Activated naive CD4-positive, alpha-beta T cell treated with anti-CD3 and anti-CD28 coated beads for 36 hours (primary cell): ENCODE measurements at regions of chrX and their contacts with region 1.

Region 1: DNA sequence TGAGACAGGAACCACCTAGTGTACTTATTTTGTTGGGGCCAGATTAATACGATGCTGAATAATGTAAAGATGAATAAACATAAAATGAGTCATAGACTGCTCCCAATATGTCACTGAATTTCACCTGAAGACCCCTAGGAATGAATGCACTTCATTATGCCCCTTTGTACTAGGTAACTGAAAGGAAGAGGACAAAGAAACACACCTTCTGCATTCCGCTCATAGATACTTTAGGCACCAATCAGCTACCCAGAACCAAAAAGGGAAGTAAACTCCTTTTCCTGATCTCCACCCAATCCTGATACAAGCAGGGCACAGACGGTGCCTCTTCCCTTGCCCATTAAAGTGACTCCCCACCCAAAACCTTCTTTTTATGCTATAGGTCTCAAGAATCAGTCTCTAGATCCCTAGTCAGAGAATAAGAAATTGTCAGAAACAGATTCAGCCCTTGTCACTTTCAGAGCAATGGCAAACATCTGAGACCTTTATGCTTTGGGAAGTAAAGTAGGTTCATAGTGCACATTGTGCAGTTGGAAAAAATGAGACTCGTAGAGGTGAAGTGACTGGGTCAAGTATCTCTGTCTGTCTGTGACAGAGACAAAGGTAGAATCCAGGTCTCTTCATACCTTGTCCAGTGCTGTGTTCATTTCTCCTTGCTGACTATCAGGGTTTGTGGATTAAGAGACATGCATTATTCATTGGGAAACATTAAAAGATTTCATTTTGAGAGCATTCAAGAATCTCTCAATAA is 2.3 kb downstream of the GPR174 start:
- DNase-seq: no peak
- H3K4me3 Mint-ChIP-seq: peak overlapping the region; percentile 93
- H3K27ac Mint-ChIP-seq: peak overlapping the region; percentile 96
- H3K4me1 Mint-ChIP-seq: peaks cover 31% of the 10 kb centered on the region
- H3K27me3 Mint-ChIP-seq: no peaks in the 10 kb centered on the region

Region 2: DNA sequence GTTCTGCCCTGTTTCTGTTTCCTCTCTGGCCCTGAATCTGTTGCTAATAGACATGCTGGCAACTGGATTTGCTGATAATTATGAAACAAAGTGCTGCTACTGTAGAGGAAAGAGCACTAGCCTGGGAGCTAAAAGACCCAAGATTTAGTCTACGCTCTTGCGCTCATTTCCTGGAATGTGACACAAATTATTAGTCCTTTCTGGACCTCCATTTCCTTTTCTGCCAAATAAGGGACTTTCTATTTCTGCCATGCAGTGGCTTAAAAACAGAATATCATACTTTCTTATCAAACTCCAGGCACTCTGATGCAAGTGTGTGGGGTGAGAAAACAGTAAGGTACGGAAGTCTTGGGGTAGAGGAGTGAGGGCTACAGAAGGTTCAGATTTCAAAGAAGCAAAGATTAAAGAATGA is 50.7 kb before region 1 on chrX:
- CTCF ChIA-PET with region 1: interaction called, 5 read pairs
- intact Hi-C with region 1: loop called (anchors 2 kb)
- DNase-seq: no peak
- H3K4me3 Mint-ChIP-seq: peak overlapping the region; percentile 68
- H3K27ac Mint-ChIP-seq: peak overlapping the region; percentile 94
- H3K4me1 Mint-ChIP-seq: peaks cover 71% of the 10 kb centered on the region
- H3K27me3 Mint-ChIP-seq: no peaks in the 10 kb centered on the region

Region 3: GRCh38 chrX:79107891-79108718 is 38.7 kb before region 1 on chrX:
- CTCF ChIA-PET with region 1: interaction called, 4 read pairs
- intact Hi-C with region 1: loop called (anchors 2 kb)
- DNase-seq: no peak
- H3K4me3 Mint-ChIP-seq: peak overlapping the region; percentile 49
- H3K27ac Mint-ChIP-seq: peak overlapping the region; percentile 88
- H3K4me1 Mint-ChIP-seq: peaks cover 64% of the 10 kb centered on the region
- H3K27me3 Mint-ChIP-seq: no peaks in the 10 kb centered on the region

Region 4: DNA sequence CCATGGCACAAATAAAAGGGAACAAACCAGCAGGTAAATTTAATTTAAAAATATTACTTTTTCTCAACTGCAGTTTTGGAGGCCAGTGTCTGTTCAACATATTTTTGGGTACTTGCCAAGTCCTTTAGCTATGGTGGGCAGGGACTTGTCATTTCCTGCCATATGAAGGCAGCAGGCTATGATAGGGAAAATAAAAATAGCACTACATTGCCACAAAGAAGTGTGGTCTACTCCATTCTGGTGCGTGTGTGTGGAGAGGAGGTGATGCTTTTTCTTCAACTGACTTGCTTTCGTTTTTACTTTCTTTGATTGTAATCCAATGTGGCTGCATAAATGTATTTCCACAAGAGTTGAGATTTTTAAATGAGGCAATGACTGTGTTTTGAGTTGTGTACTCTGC is 14.8 kb after region 1 on chrX:
- CTCF ChIA-PET with region 1: interaction called, 5 read pairs
- intact Hi-C with region 1: loop called (anchors 1 kb)
- DNase-seq: peak; percentile 51
- H3K4me3 Mint-ChIP-seq: peak overlapping the region; percentile 81
- H3K27ac Mint-ChIP-seq: peak overlapping the region; percentile 98
- H3K4me1 Mint-ChIP-seq: peaks cover 55% of the 10 kb centered on the region
- H3K27me3 Mint-ChIP-seq: no peaks in the 10 kb centered on the region

Region 5: GRCh38 chrX:79167462-79167861 is 20.6 kb after region 1 on chrX:
- CTCF ChIA-PET with region 1: interaction called, 8 read pairs
- intact Hi-C with region 1: loop called (anchors 2 kb)
- DNase-seq: no peak
- H3K4me3 Mint-ChIP-seq: peak overlapping the region; percentile 63
- H3K27ac Mint-ChIP-seq: peak overlapping the region; percentile 92
- H3K4me1 Mint-ChIP-seq: peaks cover 74% of the 10 kb centered on the region
- H3K27me3 Mint-ChIP-seq: no peaks in the 10 kb centered on the region

Region 6: GRCh38 chrX:79182616-79183015 is 35.8 kb after region 1 on chrX:
- CTCF ChIA-PET with region 1: no interaction called
- intact Hi-C with region 1: loop called (anchors 5 kb)
- DNase-seq: peak; percentile 32
- H3K4me3 Mint-ChIP-seq: peak overlapping the region; percentile 29
- H3K27ac Mint-ChIP-seq: peak overlapping the region; percentile 90
- H3K4me1 Mint-ChIP-seq: peaks cover 68% of the 10 kb centered on the region
- H3K27me3 Mint-ChIP-seq: no peaks in the 10 kb centered on the region